PC-3 (cell line): ENCODE measurements at regions of chr6 and their contacts with region 1.

Region 1: GRCh38 chr6:2695454-2696095 is 55.1 kb downstream of the MYLK4 start:
- DNase-seq: peak; percentile 78
- ATAC-seq: peak; percentile 78
- H3K4me3 ChIP-seq: no peak overlapping the region
- H3K27ac ChIP-seq: no peak overlapping the region
- H3K4me1 ChIP-seq: no peaks in the 10 kb centered on the region
- H3K27me3 ChIP-seq: no peaks in the 10 kb centered on the region
- CTCF ChIP-seq: peak; percentile 84

Region 2: GRCh38 chr6:1596088-1596852 is 1099.3 kb before region 1 on chr6:
- CTCF ChIA-PET with region 1: no interaction called
- POLR2A ChIA-PET with region 1: no interaction called
- intact Hi-C with region 1: loop called (anchors 2 kb)
- DNase-seq: peak; percentile 66
- ATAC-seq: peak; percentile 53
- H3K4me3 ChIP-seq: peak overlapping the region; percentile 34; the same call in 1 of the 2 replicates
- H3K27ac ChIP-seq: no peak overlapping the region
- H3K4me1 ChIP-seq: peaks cover 39% of the 10 kb centered on the region
- H3K27me3 ChIP-seq: peaks cover 20% of the 10 kb centered on the region
- CTCF ChIP-seq: peak; percentile 93

Region 3: DNA sequence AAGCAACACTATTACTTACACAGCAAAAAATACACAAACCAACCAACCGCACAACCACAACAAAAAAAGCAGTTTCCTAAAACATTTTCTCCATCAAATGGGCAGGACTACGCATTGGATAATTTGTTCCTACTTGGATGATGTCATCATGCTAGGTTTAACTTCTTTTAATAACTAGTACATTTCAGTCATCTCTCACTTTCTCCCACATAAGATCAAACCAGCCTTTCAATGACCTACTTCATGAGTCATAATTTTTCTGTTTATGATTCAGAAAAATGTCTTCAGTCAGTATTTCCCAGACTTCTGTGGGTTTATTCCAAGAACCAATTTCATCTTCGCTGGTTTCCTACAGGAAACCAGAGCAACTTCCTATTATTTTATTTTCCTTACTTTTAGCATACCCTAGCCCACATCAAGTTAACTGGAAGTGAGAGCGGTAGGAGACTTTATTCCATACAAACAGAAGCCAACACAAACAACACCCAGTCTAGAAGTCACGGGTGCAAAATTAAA is 584.4 kb before region 1 on chr6:
- CTCF ChIA-PET with region 1: no interaction called
- POLR2A ChIA-PET with region 1: no interaction called
- intact Hi-C with region 1: loop called (anchors 5 kb)
- DNase-seq: peak; percentile 80
- ATAC-seq: peak; percentile 75
- H3K4me3 ChIP-seq: no peak overlapping the region
- H3K27ac ChIP-seq: peak overlapping the region; percentile 72
- H3K4me1 ChIP-seq: peaks cover 17% of the 10 kb centered on the region
- H3K27me3 ChIP-seq: no peaks in the 10 kb centered on the region
- CTCF ChIP-seq: no peak

Region 4: GRCh38 chr6:2196079-2196679 is 499.4 kb before region 1 on chr6:
- CTCF ChIA-PET with region 1: no interaction called
- POLR2A ChIA-PET with region 1: no interaction called
- intact Hi-C with region 1: loop called (anchors 10 kb)
- DNase-seq: peak; percentile 76
- ATAC-seq: peak; percentile 43
- H3K4me3 ChIP-seq: no peak overlapping the region
- H3K27ac ChIP-seq: no peak overlapping the region; the same call in 1 of the 2 replicates
- H3K4me1 ChIP-seq: peaks cover 21% of the 10 kb centered on the region
- H3K27me3 ChIP-seq: no peaks in the 10 kb centered on the region
- CTCF ChIP-seq: peak; percentile 89

Region 5: GRCh38 chr6:2353412-2354137 is 342.0 kb before region 1 on chr6:
- CTCF ChIA-PET with region 1: no interaction called
- POLR2A ChIA-PET with region 1: no interaction called
- intact Hi-C with region 1: loop called (anchors 2 kb)
- DNase-seq: peak; percentile 90
- ATAC-seq: peak; percentile 61
- H3K4me3 ChIP-seq: no peak overlapping the region
- H3K27ac ChIP-seq: no peak overlapping the region
- H3K4me1 ChIP-seq: no peaks in the 10 kb centered on the region
- H3K27me3 ChIP-seq: no peaks in the 10 kb centered on the region
- CTCF ChIP-seq: peak; percentile 94

Region 6: GRCh38 chr6:2448820-2449571 is 246.6 kb before region 1 on chr6:
- CTCF ChIA-PET with region 1: no interaction called
- POLR2A ChIA-PET with region 1: no interaction called
- intact Hi-C with region 1: loop called (anchors 1 kb)
- DNase-seq: peak; percentile 85
- ATAC-seq: peak; percentile 68
- H3K4me3 ChIP-seq: peak overlapping the region; percentile 26; the same call in 1 of the 2 replicates
- H3K27ac ChIP-seq: no peak overlapping the region
- H3K4me1 ChIP-seq: peaks cover 20% of the 10 kb centered on the region
- H3K27me3 ChIP-seq: no peaks in the 10 kb centered on the region
- CTCF ChIP-seq: peak; percentile 89

Region 7: DNA sequence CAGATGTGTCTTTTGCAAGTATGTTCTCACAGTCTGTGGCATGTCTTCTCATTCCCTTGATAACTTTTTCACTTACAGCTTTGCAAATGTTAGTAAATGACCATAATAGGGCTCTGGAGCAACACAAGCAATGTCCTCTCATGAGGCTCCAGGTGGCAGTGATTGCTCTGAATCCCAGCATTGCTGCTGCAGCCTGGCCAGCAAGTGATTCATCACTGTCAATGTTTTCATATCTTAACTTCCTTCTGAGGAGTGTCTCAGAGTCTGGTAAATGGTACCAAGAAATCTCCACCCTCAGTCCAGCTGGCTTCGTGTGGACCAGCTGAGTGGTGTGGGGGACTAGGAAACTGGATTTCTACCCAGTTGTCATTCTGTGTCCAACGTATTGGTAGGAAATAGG is 84.5 kb before region 1 on chr6:
- CTCF ChIA-PET with region 1: no interaction called
- POLR2A ChIA-PET with region 1: no interaction called
- intact Hi-C with region 1: loop called (anchors 1 kb)
- DNase-seq: peak; percentile 61
- ATAC-seq: peak; percentile 99
- H3K4me3 ChIP-seq: no peak overlapping the region
- H3K27ac ChIP-seq: no peak overlapping the region
- H3K4me1 ChIP-seq: peaks cover 4% of the 10 kb centered on the region; the same call in 1 of the 2 replicates
- H3K27me3 ChIP-seq: no peaks in the 10 kb centered on the region
- CTCF ChIP-seq: peak; percentile 33; the same call in 1 of the 2 replicates